ENCODE measurements at regions of chr11 and their contacts with region 1.

Region 1: DNA sequence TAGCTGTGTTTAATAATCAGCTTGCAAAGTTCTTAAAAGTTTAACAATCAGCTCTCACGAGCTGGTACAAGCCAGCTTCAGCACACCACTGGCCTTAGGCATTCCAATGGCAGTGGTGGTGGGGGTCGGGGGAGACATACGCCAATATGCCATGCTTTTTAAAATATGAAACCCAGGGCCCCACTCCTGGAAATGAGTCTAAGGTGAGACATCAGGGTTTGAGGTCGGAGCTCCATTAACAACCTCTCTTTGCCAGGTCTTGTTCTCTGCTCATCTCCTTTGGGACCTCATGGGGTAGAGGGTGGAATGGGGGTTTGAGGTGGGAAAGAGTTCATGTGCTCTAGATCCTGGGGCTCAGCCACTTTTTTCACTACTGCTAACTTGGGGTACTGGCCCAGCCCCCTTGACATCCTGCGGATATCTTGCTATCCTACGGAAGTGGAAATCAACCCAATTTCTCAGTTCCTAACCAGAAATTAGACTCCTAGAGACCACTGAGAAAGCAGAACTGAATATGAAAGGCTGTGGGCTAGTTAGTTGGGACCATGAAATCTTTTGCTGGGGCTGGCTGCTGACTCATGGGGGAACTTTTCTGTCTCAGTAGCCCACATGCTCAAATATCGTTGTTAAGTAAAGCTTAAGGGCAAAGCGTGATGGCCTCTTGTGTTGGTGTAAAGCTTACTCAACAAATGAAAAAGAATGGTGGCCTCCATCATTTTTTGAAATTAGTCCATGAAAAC is 90.1 kb downstream of the PDHX start:
- DNase-seq: no peak
- H3K4me3 Mint-ChIP-seq: no peak overlapping the region
- H3K27ac Mint-ChIP-seq: no peak overlapping the region
- H3K4me1 Mint-ChIP-seq: peaks cover 20% of the 10 kb centered on the region
- H3K27me3 Mint-ChIP-seq: no peaks in the 10 kb centered on the region
- CTCF ChIP-seq: no peak

Region 2: GRCh38 chr11:35030716-35031213 is 24.2 kb after region 1 on chr11:
- CTCF ChIA-PET with region 1: interaction called, 16 read pairs
- POLR2A ChIA-PET with region 1: interaction called, 61 read pairs
- intact Hi-C with region 1: no loop called
- DNase-seq: peak; percentile 97
- H3K4me3 Mint-ChIP-seq: no peak overlapping the region
- H3K27ac Mint-ChIP-seq: peak overlapping the region; percentile 77
- H3K4me1 Mint-ChIP-seq: peaks cover 30% of the 10 kb centered on the region
- H3K27me3 Mint-ChIP-seq: no peaks in the 10 kb centered on the region
- CTCF ChIP-seq: no peak

Region 3: DNA sequence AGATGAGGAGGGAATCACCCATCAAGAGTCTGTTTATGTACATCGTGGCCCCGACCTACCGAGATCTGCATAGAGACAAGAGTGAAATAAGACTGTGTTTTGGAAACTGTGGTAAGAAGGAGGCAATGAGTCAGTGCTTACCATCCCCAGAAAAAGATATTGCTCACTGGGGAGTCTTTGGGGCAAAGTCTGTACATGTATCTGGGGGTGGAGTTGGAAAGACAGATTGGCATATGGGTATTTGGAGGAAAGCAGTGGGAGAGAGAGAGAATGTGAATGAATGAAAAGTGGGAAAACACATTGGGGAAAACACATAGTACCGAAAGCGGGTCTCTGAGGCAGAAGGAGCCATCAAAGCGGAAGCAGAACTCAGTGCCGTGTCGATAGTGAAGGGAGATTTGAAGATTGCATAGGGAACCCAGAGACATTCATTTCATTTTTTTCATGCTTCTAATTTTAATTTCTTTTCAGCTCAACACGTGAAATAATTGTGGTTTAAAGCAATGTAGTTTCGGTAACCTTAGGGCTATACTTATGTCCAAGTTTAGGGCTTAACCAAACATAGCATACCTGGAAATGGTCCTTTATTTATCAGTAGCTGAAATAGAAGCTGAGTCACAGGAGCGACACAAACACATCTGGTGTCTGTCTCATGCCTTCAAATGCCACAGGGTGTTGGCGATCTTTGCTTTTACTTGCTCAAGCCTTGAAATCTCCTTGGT is 33.8 kb after region 1 on chr11:
- CTCF ChIA-PET with region 1: interaction called, 4 read pairs
- POLR2A ChIA-PET with region 1: interaction called, 12 read pairs
- intact Hi-C with region 1: no loop called
- DNase-seq: peak; percentile 92
- H3K4me3 Mint-ChIP-seq: peak overlapping the region; percentile 69
- H3K27ac Mint-ChIP-seq: peak overlapping the region; percentile 86
- H3K4me1 Mint-ChIP-seq: peaks cover 29% of the 10 kb centered on the region
- H3K27me3 Mint-ChIP-seq: no peaks in the 10 kb centered on the region
- CTCF ChIP-seq: no peak

Region 4: GRCh38 chr11:35082321-35083182 is 76.0 kb after region 1 on chr11:
- CTCF ChIA-PET with region 1: no interaction called
- POLR2A ChIA-PET with region 1: no interaction called
- intact Hi-C with region 1: loop called (anchors 10 kb)
- DNase-seq: peak; percentile 86
- H3K4me3 Mint-ChIP-seq: peak overlapping the region; percentile 24
- H3K27ac Mint-ChIP-seq: peak overlapping the region; percentile 73
- H3K4me1 Mint-ChIP-seq: peaks cover 39% of the 10 kb centered on the region
- H3K27me3 Mint-ChIP-seq: no peaks in the 10 kb centered on the region
- CTCF ChIP-seq: no peak

Region 5: GRCh38 chr11:35174666-35175065 is 168.1 kb after region 1 on chr11:
- CTCF ChIA-PET with region 1: interaction called, 3 read pairs
- POLR2A ChIA-PET with region 1: interaction called, 12 read pairs
- intact Hi-C with region 1: no loop called
- DNase-seq: peak; percentile 30
- H3K4me3 Mint-ChIP-seq: no peak overlapping the region
- H3K27ac Mint-ChIP-seq: peak overlapping the region; percentile 28
- H3K4me1 Mint-ChIP-seq: peaks cover 32% of the 10 kb centered on the region
- H3K27me3 Mint-ChIP-seq: no peaks in the 10 kb centered on the region
- CTCF ChIP-seq: no peak

Region 6: GRCh38 chr11:35305670-35306382 is 299.3 kb after region 1 on chr11:
- CTCF ChIA-PET with region 1: no interaction called
- POLR2A ChIA-PET with region 1: no interaction called
- intact Hi-C with region 1: loop called (anchors 5 kb)
- DNase-seq: peak; percentile 61
- H3K4me3 Mint-ChIP-seq: no peak overlapping the region
- H3K27ac Mint-ChIP-seq: no peak overlapping the region
- H3K4me1 Mint-ChIP-seq: peaks cover 38% of the 10 kb centered on the region
- H3K27me3 Mint-ChIP-seq: no peaks in the 10 kb centered on the region
- CTCF ChIP-seq: peak; percentile 18

Measured in MCF 10A (cell line).